B cell (primary cell): ENCODE measurements at regions of chr6 and their contacts with region 1.

Region 1: GRCh38 chr6:151323791-151324487 is 67.4 kb downstream of the ZBTB2 start:
- DNase-seq: peak; percentile 77
- ATAC-seq: peak; percentile 80
- H3K4me3 ChIP-seq: no peak overlapping the region
- H3K4me3 Mint-ChIP-seq: peak overlapping the region; percentile 80
- H3K27ac ChIP-seq: no peak overlapping the region
- H3K27ac Mint-ChIP-seq: peak overlapping the region; percentile 21
- H3K4me1 ChIP-seq: peaks cover 19 to 20% of the 10 kb centered on the region in 2 donors
- H3K4me1 Mint-ChIP-seq: peaks cover 26% of the 10 kb centered on the region
- H3K27me3 ChIP-seq: peaks cover 0 to 18% (median 1%) of the 10 kb centered on the region in 4 experiments
- H3K27me3 Mint-ChIP-seq: peaks cover 62% of the 10 kb centered on the region
- CTCF ChIP-seq: peak; percentile 98

Region 2: DNA sequence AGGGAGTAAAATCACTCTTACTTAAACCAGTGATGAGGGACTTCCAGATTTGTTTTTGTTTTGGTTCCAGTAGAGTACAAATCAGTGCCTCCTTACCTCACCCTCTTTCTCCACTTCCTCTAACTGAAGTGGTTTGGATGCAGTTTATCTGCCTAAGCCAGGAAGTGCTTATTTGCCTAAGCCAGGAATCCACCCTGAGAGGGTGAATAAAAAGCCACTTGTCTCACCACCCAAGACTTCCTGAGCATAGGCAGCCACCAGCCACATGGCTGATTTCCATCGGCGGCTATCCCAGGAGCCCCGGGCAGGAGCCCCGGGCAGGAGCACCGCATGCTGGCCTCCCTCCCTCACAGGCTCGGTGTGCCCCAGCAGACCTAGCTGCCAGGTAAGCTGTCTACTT is 1471.8 kb before region 1 on chr6:
- CTCF ChIA-PET with region 1: no interaction called
- POLR2A ChIA-PET with region 1: no interaction called
- intact Hi-C with region 1: no loop called
- DNase-seq: peak; percentile 77
- ATAC-seq: peak; percentile 86
- H3K4me3 ChIP-seq: peak overlapping the region in 1 of 5 experiments; percentile 51
- H3K4me3 Mint-ChIP-seq: peak overlapping the region; percentile 73
- H3K27ac ChIP-seq: peak overlapping the region in 1 of 2 donors; percentile 29
- H3K27ac Mint-ChIP-seq: peak overlapping the region; percentile 61
- H3K4me1 ChIP-seq: peaks cover 18 to 24% of the 10 kb centered on the region in 2 donors
- H3K4me1 Mint-ChIP-seq: peaks cover 27% of the 10 kb centered on the region
- H3K27me3 ChIP-seq: peaks cover 0 to 8% (median 4%) of the 10 kb centered on the region in 4 experiments
- H3K27me3 Mint-ChIP-seq: peaks cover 3% of the 10 kb centered on the region
- CTCF ChIP-seq: no peak

Region 3: GRCh38 chr6:150068720-150069648 is 1255.0 kb before region 1 on chr6 and contains the start of gene ULBP3:
- CTCF ChIA-PET with region 1: interaction called, 3 read pairs
- POLR2A ChIA-PET with region 1: no interaction called
- intact Hi-C with region 1: loop called (anchors 10 kb)
- DNase-seq: peak; percentile 80
- ATAC-seq: peak; percentile 90
- H3K4me3 ChIP-seq: peak within 1 kb of the TSS; percentile 11 to 71 (median 70)
- H3K4me3 Mint-ChIP-seq: peak within 1 kb of the TSS; percentile 87
- H3K27ac ChIP-seq: no peak within 1 kb of the TSS
- H3K27ac Mint-ChIP-seq: peak within 1 kb of the TSS; percentile 38
- H3K4me1 ChIP-seq: peaks cover 5 to 18% of the 10 kb centered on the region in 2 donors
- H3K4me1 Mint-ChIP-seq: peaks cover 23% of the 10 kb centered on the region
- H3K27me3 ChIP-seq: peaks cover 0 to 22% (median 4%) of the 10 kb centered on the region in 4 experiments
- H3K27me3 Mint-ChIP-seq: peaks cover 18% of the 10 kb centered on the region
- CTCF ChIP-seq: peak; percentile 50
- total RNA-seq, gene ULBP3: 0.61 and 0.69 TPM in 2 replicates

Region 4: DNA sequence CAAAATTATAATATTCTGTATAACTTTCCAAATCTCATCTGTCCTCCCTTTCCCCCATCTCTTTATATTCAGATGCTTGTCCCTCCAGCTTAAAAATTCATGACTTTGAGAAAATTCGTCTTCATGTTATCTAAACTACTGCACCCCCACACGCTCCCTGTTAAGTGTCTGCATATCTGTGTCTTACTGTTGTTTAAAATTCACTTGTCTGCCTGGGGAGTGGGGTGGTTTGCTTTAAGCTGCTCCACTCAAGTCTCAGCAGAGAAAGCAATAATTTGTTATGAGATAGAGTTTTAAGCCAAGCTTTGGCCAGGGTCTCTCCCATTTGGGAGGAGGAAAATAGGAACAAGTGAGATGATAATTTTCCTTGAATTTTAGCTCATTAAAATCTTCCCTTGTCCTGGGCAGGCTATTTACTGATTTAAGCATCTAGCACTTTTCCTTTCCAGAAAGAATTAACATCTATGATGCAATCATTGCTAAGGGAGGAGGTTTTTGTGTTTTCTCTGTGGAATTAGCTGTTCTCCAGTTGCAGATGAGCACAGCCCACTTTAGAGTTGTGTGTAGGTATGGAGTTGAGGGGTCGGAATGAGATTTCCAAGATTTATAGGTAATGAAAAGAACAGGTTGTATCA is 421.7 kb before region 1 on chr6:
- CTCF ChIA-PET with region 1: interaction called, 297 read pairs
- POLR2A ChIA-PET with region 1: no interaction called
- intact Hi-C with region 1: no loop called
- DNase-seq: no peak
- ATAC-seq: no peak
- H3K4me3 ChIP-seq: no peak overlapping the region
- H3K4me3 Mint-ChIP-seq: no peak overlapping the region
- H3K27ac ChIP-seq: no peak overlapping the region
- H3K27ac Mint-ChIP-seq: no peak overlapping the region
- H3K4me1 ChIP-seq: peaks cover 0 to 6% of the 10 kb centered on the region in 2 donors
- H3K4me1 Mint-ChIP-seq: peaks cover 6% of the 10 kb centered on the region
- H3K27me3 ChIP-seq: no peaks in the 10 kb centered on the region
- H3K27me3 Mint-ChIP-seq: no peaks in the 10 kb centered on the region
- CTCF ChIP-seq: no peak

Region 5: GRCh38 chr6:151335930-151336329 is 12.0 kb after region 1 on chr6:
- CTCF ChIA-PET with region 1: interaction called, 38 read pairs
- POLR2A ChIA-PET with region 1: no interaction called
- intact Hi-C with region 1: no loop called
- DNase-seq: no peak
- ATAC-seq: no peak
- H3K4me3 ChIP-seq: no peak overlapping the region
- H3K4me3 Mint-ChIP-seq: no peak overlapping the region
- H3K27ac ChIP-seq: no peak overlapping the region
- H3K27ac Mint-ChIP-seq: no peak overlapping the region
- H3K4me1 ChIP-seq: no peaks in the 10 kb centered on the region
- H3K4me1 Mint-ChIP-seq: peaks cover 3% of the 10 kb centered on the region
- H3K27me3 ChIP-seq: no peaks in the 10 kb centered on the region
- H3K27me3 Mint-ChIP-seq: peaks cover 31% of the 10 kb centered on the region
- CTCF ChIP-seq: no peak

Region 6: DNA sequence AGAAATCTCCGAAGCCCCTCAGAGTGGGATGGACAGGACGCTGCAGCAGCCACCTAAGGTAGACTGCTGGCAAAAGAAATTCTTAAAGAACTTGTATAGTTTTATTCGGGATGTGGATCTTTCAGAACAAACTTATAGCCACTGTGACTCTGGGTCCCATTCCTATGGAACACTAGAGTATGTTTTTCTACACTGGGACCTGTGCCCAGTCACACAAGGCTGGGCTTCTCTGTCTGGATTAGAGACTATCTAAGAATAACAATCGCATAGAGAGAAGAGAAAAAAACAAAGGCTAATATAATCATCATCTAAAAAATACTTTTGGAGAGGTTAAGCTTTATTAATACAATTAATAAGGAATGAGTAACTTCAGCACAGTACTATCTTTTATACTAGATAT is 99.0 kb after region 1 on chr6:
- CTCF ChIA-PET with region 1: no interaction called
- POLR2A ChIA-PET with region 1: no interaction called
- intact Hi-C with region 1: no loop called
- DNase-seq: no peak
- ATAC-seq: no peak
- H3K4me3 ChIP-seq: no peak overlapping the region
- H3K4me3 Mint-ChIP-seq: no peak overlapping the region
- H3K27ac ChIP-seq: no peak overlapping the region
- H3K27ac Mint-ChIP-seq: no peak overlapping the region
- H3K4me1 ChIP-seq: no peaks in the 10 kb centered on the region
- H3K4me1 Mint-ChIP-seq: no peaks in the 10 kb centered on the region
- H3K27me3 ChIP-seq: no peaks in the 10 kb centered on the region
- H3K27me3 Mint-ChIP-seq: no peaks in the 10 kb centered on the region
- CTCF ChIP-seq: no peak